ENCODE measurements at regions of chr10 and their contacts with region 1.

Region 1: GRCh38 chr10:94963901-94964300 is 25.4 kb downstream of the CYP2C9 start:
- DNase-seq: peak; percentile 27
- ATAC-seq: peak; percentile 98
- H3K4me3 ChIP-seq: no peak overlapping the region
- H3K27ac ChIP-seq: no peak overlapping the region
- H3K4me1 ChIP-seq: no peaks in the 10 kb centered on the region
- H3K27me3 ChIP-seq: no peaks in the 10 kb centered on the region
- CTCF ChIP-seq: peak; percentile 88

Region 2: DNA sequence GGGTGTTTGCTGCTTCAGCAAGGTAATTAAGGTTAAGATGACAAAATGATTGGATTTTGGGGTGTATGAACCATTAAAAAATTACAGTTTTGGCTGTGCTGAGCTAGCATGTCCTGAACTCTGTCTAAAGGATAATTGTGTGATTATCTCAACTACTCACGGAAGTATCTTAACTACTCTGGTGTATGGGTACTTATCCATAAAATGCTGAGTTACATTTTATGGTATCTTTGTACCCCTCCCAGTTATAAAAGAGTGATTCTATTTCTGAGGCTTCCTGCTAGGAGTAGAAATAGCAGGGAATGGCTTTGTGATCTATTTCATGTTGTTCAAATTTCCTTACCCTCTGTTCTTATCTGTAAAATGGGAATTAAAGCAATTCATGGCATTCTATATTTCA is 257.8 kb before region 1 on chr10:
- CTCF ChIA-PET with region 1: no interaction called
- POLR2A ChIA-PET with region 1: interaction called, 10 read pairs
- in situ Hi-C with region 1: no loop called
- intact Hi-C with region 1: no loop called
- DNase-seq: no peak
- ATAC-seq: no peak
- H3K4me3 ChIP-seq: no peak overlapping the region
- H3K27ac ChIP-seq: no peak overlapping the region
- H3K4me1 ChIP-seq: no peaks in the 10 kb centered on the region
- H3K27me3 ChIP-seq: no peaks in the 10 kb centered on the region; the same call in 1 of the 2 replicates
- CTCF ChIP-seq: no peak

Region 3: GRCh38 chr10:95176101-95176500 is 212.2 kb after region 1 on chr10:
- CTCF ChIA-PET with region 1: interaction called, 3 read pairs
- POLR2A ChIA-PET with region 1: no interaction called
- in situ Hi-C with region 1: no loop called
- intact Hi-C with region 1: loop called (anchors 10 kb)
- DNase-seq: no peak
- ATAC-seq: peak; percentile 78; the same call in 1 of the 2 replicates
- H3K4me3 ChIP-seq: no peak overlapping the region
- H3K27ac ChIP-seq: no peak overlapping the region
- H3K4me1 ChIP-seq: no peaks in the 10 kb centered on the region
- H3K27me3 ChIP-seq: peaks cover 2% of the 10 kb centered on the region; the same call in 1 of the 2 replicates
- CTCF ChIP-seq: peak; percentile 68

Measured in Panc1 (cell line).